Right ventricle myocardium superior (tissue), 1 donor: ENCODE measurements at regions of chr14 and their contacts with region 1.

Region 1: DNA sequence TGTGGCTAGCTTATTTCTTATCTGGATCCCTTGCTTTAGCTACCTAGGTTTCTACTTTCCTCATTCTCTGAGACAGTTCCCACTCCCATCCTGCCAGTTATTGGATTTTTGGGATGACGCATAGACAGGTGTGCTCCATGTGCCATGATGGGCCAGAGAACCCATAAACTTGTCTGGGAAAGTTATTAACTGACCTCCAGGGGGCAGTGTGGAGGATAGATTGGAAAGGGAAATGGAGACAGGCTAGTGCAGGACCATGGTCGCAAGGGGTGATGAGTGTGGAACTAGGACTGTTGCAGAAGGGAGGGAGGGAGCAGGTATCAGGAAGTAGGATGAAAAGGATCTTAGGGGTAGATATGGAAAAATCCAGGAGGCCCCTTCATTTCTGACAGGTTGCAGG is 80.3 kb downstream of the ESRRB start:
- DNase-seq: no peak
- ATAC-seq: no peak

Region 2: GRCh38 chr14:76647697-76648298 is 191.6 kb after region 1 on chr14:
- intact Hi-C with region 1: loop called (anchors 5 kb)
- DNase-seq: no peak
- ATAC-seq: peak; percentile 68